Right cardiac atrium (tissue), 5 donors: ENCODE measurements at regions of chr6 and their contacts with region 1.

Region 1: GRCh38 chr6:41683510-41684310 is 45.4 kb downstream of the MDFI start:
- DNase-seq: peak; percentile 84 to 95 (median 94)
- ATAC-seq: peak; percentile 84
- H3K4me3 ChIP-seq: peak overlapping the region; percentile 39
- H3K27ac ChIP-seq: peak overlapping the region; percentile 53
- H3K4me1 ChIP-seq: no peaks in the 10 kb centered on the region
- H3K27me3 ChIP-seq: no peaks in the 10 kb centered on the region

Region 2: GRCh38 chr6:41449399-41450245 is 234.1 kb before region 1 on chr6:
- intact Hi-C with region 1: loop called in 1 of 4 experiments (anchors 10 kb)
- DNase-seq: peak; percentile 54 to 80 (median 73)
- ATAC-seq: peak; percentile 30 to 43
- H3K4me3 ChIP-seq: no peak overlapping the region
- H3K27ac ChIP-seq: no peak overlapping the region
- H3K4me1 ChIP-seq: peaks cover 12% of the 10 kb centered on the region
- H3K27me3 ChIP-seq: no peaks in the 10 kb centered on the region

Region 3: GRCh38 chr6:41463062-41463930 is 220.4 kb before region 1 on chr6:
- intact Hi-C with region 1: loop called in 3 of 4 experiments (anchors 10 kb)
- DNase-seq: peak; percentile 74 to 91 (median 87)
- ATAC-seq: peak; percentile 90 to 92
- H3K4me3 ChIP-seq: no peak overlapping the region
- H3K27ac ChIP-seq: no peak overlapping the region
- H3K4me1 ChIP-seq: no peaks in the 10 kb centered on the region
- H3K27me3 ChIP-seq: no peaks in the 10 kb centered on the region

Region 4: DNA sequence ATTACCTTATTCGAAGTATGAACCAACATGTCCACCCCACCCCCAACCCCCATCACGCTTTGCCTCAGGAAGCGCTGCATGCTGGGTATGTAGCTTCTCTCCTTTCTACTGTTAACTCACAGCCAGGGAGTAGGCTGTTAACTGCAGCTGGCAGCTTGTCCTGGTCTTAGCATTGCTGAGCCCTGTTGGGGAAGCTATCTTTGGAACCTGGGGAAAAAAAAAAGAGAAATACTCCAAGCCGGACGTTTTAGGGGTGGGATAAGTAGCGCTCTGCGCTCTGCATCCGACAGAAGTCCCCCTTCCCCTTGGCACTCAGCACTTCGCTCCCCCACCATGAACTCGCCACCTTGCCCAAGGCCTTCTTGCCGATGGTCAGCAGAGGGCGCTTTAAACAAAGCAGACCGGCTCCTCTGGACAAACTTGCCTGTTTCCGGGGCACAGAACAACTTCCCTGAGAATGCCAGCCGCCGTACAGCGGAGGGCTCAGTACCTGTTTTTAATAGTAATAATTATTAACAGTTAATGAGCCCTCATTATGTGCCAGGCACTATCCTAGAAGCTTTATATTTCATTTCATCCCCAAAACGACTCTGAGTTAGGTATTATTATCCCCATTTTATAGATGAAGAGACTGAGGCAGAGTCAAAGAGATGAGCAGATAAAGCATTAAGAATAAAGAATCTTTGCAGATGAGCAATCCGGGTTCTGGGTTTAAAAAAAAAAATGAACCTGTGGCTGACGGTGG is 80.7 kb before region 1 on chr6:
- intact Hi-C with region 1: loop called (anchors 1 to 5 kb)
- DNase-seq: peak; percentile 83 to 91 (median 91)
- ATAC-seq: peak; percentile 77 to 79
- H3K4me3 ChIP-seq: no peak overlapping the region
- H3K27ac ChIP-seq: no peak overlapping the region
- H3K4me1 ChIP-seq: no peaks in the 10 kb centered on the region
- H3K27me3 ChIP-seq: no peaks in the 10 kb centered on the region

Region 5: DNA sequence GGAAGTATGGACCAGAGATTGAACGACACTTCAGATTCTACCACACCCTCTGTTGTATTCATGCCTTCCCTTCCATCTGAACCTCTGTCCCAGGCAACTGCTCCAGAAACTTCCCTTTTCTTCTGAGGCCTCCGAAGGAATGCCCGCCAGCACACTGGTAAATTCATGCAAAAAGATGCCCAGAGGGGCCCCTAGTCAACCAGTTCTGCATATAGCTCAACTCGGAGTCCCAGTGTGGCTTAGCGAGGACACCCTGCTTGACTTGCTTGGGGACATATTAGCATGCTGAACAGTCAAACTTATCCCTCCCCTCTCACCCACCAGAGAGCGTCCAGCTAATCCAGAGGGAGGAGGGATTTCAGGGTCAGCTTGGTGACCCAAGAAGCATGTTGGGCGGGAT is 68.5 kb before region 1 on chr6:
- intact Hi-C with region 1: no loop called
- DNase-seq: no peak
- ATAC-seq: no peak
- H3K4me3 ChIP-seq: no peak overlapping the region
- H3K27ac ChIP-seq: no peak overlapping the region
- H3K4me1 ChIP-seq: no peaks in the 10 kb centered on the region
- H3K27me3 ChIP-seq: no peaks in the 10 kb centered on the region